Panc1 (cell line): ENCODE measurements at regions of chrX and their contacts with region 1.

Region 1: GRCh38 chrX:106249706-106250379 is 81.7 kb downstream of the PWWP3B start:
- DNase-seq: no peak
- ATAC-seq: no peak
- H3K4me3 ChIP-seq: no peak overlapping the region
- H3K27ac ChIP-seq: no peak overlapping the region
- H3K4me1 ChIP-seq: no peaks in the 10 kb centered on the region
- H3K27me3 ChIP-seq: no peaks in the 10 kb centered on the region
- CTCF ChIP-seq: no peak

Region 2: GRCh38 chrX:106302242-106302662 is 52.4 kb after region 1 on chrX:
- CTCF ChIA-PET with region 1: no interaction called
- POLR2A ChIA-PET with region 1: no interaction called
- in situ Hi-C with region 1: no loop called
- intact Hi-C with region 1: loop called (anchors 10 kb)
- DNase-seq: no peak
- ATAC-seq: no peak
- H3K4me3 ChIP-seq: no peak overlapping the region
- H3K27ac ChIP-seq: no peak overlapping the region
- H3K4me1 ChIP-seq: no peaks in the 10 kb centered on the region
- H3K27me3 ChIP-seq: no peaks in the 10 kb centered on the region
- CTCF ChIP-seq: no peak

Region 3: DNA sequence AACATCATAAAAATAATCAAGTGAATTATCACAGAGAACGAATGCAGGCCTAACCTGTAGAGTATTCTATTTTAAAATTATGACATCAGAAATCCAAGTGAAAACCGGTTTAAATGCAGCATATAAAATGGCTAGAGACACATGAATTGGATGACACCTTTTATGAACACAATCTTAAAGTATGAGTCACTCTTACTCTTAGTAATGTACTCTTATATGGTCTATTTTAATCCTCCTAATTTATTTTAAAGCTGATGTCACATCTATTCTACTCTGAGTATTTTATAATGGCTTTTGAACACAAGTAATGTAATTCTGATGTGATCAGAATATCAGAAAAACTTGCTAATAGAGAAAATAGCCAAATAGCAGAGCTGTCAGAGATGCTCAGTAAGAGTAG is 200.6 kb after region 1 on chrX:
- CTCF ChIA-PET with region 1: no interaction called
- POLR2A ChIA-PET with region 1: no interaction called
- in situ Hi-C with region 1: no loop called
- intact Hi-C with region 1: no loop called
- DNase-seq: no peak
- ATAC-seq: no peak
- H3K4me3 ChIP-seq: no peak overlapping the region
- H3K27ac ChIP-seq: no peak overlapping the region
- H3K4me1 ChIP-seq: no peaks in the 10 kb centered on the region
- H3K27me3 ChIP-seq: no peaks in the 10 kb centered on the region
- CTCF ChIP-seq: no peak